Astrocyte of the cerebellum (primary cell): ENCODE measurements at regions of chr2 and their contacts with region 1.

Region 1: DNA sequence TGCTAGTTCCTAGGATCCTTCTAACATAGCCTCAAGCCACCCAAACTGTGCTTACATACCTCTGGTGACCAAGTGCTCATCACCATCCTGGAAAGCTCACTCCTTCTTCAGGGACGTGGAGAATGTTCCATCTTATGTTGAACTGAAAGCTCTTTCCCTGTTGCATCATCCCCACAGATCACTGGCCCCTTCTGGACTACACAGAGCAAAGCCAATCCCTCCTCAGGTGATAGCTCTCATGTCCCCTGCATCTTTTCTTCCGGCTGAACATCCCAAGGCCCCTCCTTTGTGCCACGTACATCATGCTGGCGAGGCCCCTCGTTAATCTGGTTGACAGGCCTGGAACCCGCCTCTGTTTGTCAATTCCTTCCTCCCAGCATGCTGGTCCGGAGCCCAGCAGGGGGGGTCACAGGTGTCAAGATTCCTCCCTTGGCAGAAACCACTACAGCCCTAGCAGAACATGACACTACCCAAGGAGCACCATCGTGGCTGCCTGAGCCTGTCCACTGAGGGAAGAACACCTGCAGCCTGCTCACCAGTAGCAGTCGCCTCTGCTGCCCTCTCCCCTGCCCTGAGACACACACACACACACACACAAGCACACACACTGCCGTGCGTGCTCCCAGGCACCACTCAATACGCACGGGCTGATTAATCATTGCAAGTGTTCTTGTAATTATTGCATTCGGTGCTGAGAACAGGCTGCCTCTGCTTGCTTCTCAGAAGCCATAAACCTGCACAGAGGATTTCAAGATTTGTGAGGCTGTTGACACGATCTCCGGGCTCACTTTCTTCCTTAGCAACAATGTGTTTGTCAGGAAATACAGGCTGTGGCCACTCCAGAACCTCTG is 6.3 kb upstream of the KCNK3 start:
- DNase-seq: no peak
- H3K4me3 ChIP-seq: no peak overlapping the region
- CTCF ChIP-seq: no peak

Region 2: DNA sequence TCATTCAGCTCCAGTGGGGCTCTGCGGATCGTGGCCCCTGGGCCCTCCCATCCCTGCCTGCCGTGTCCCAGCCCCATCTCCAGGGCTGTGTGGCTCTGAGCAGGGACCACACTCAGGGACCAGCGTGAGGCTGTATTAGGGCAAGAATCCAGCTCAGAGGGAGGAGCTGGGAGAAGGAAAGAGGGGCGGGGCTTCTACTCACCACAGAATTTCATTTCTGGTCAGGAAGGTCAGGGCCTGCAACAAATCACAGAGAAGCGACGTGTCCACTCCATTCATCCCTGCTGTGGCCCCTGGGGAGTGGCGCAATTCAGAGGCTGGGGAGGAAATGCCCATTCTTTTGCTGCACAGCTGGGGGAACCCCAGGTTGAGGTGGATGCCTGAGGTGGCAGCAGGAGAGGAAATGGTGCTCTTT is 45.9 kb before region 1 on chr2:
- in situ Hi-C with region 1: no loop called
- DNase-seq: peak; percentile 6
- H3K4me3 ChIP-seq: no peak overlapping the region
- CTCF ChIP-seq: no peak

Region 3: GRCh38 chr2:26730549-26731344 is 44.5 kb after region 1 on chr2:
- in situ Hi-C with region 1: loop called (anchors 5 kb)
- DNase-seq: no peak
- H3K4me3 ChIP-seq: no peak overlapping the region
- CTCF ChIP-seq: no peak